HepG2 (cell line): ENCODE measurements at regions of chr16 and their contacts with region 1.

Region 1: DNA sequence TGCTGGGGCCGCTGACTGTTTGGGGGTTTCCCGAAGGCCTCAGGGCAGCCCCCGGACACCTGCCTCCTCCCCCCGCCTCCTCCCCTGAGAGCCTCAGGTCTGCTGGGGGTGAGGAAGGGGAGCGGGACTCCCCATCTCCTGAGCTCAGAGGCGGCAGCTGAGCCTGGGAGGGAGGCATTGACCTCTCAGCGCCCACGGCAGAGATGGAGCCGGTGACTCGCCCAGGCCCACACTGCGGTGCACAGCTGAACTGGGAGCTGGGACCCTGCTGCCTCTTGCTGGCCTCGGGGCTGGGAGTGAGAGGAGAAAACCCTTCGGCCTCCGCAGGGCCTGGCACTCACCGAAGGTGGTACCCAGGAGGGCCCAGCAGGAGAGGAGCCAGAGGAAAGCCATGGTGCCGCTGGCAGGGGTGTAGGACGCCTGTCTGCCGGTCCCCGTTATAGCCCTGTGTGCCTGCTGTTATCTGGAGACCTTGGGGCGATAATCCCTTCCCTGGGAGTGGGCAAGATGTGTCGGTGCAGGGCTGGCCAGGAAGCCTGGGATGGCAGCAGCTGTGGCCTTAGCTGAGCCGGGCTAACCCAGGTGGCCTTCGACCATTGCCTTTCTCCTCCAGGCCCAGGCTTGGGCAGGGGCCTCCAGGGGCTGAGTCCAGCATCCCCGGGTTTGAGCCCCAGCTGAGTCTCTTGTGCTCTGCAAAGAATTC is at the start of gene CTRB2:
- DNase-seq: no peak
- ATAC-seq: peak; percentile 37
- H3K4me3 ChIP-seq: no peak within 1 kb of the TSS
- H3K27ac ChIP-seq: no peak within 1 kb of the TSS
- H3K4me1 ChIP-seq: peaks cover 19% of the 10 kb centered on the region; the same call in 1 of the 2 replicates
- H3K27me3 ChIP-seq: peaks cover 31 to 73% of the 10 kb centered on the region in 2 experiments
- CTCF ChIP-seq: no peak
- EP300 ChIP-seq: no peak
- POLR2A ChIP-seq: no peak
- RAD21 ChIP-seq: no peak
- total RNA-seq, gene CTRB2: not detected in 2 replicates

Region 2: GRCh38 chr16:75224306-75225091 is 17.6 kb after region 1 on chr16:
- CTCF ChIA-PET with region 1: no interaction called
- POLR2A ChIA-PET with region 1: interaction called, 4 read pairs
- in situ Hi-C with region 1: no loop called
- intact Hi-C with region 1: loop called (anchors 2 kb)
- DNase-seq: no peak
- ATAC-seq: peak; percentile 29
- H3K4me3 ChIP-seq: no peak overlapping the region
- H3K27ac ChIP-seq: no peak overlapping the region
- H3K4me1 ChIP-seq: peaks cover 30% of the 10 kb centered on the region
- H3K27me3 ChIP-seq: peaks cover 10 to 22% of the 10 kb centered on the region in 2 experiments
- CTCF ChIP-seq: peak; percentile 10; the same call in 1 of the 2 replicates
- EP300 ChIP-seq: no peak
- POLR2A ChIP-seq: no peak
- RAD21 ChIP-seq: no peak